ENCODE measurements at regions of chr7 and their contacts with region 1.

Region 1: DNA sequence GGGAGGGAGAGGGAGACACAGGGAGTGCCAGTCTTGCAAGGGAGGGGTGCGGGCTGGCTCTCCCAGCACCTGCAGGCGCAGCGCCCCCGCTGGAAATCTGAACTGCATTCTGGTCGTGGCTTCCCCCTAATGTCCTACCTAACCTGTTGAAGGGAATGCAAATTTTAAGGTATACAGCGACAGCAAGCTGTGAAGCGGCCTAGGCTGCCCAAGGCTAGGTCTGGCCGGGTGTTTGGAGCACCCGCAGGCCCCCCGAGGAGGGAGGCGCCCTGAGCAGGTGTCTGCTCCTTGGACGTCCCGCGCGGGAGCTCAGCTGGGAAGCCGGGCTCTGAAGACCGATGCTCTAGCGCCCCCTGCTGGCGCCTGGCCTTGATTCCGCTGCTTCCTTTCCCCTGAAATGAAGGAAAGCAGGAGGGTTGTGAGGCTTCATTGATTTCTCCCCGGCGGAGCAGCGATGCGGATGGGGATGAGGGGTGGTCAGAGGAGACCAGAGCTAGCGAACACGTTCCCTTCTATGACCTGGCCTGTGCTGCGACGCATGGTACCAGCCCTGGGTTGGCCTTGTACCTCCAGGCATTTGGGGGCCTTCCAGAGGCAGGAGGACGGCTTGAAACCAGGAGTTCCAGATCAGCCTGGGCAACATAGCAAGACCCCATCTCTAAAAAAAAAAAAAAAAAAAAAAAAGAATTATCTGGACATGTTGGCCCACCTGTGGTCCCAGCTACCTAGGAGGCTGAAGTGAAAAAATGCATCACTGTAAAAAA is 601.3 kb downstream of the GALNT17 start:
- DNase-seq: peak; percentile 71 to 85
- ATAC-seq: peak; percentile 46 to 76 (median 66)
- H3K4me3 ChIP-seq: no peak overlapping the region
- H3K27ac ChIP-seq: no peak overlapping the region
- H3K4me1 ChIP-seq: no peaks in the 10 kb centered on the region
- H3K27me3 ChIP-seq: peaks cover 0 to 4% (median 0%) of the 10 kb centered on the region in 3 donors
- CTCF ChIP-seq: peak; percentile 95

Region 2: DNA sequence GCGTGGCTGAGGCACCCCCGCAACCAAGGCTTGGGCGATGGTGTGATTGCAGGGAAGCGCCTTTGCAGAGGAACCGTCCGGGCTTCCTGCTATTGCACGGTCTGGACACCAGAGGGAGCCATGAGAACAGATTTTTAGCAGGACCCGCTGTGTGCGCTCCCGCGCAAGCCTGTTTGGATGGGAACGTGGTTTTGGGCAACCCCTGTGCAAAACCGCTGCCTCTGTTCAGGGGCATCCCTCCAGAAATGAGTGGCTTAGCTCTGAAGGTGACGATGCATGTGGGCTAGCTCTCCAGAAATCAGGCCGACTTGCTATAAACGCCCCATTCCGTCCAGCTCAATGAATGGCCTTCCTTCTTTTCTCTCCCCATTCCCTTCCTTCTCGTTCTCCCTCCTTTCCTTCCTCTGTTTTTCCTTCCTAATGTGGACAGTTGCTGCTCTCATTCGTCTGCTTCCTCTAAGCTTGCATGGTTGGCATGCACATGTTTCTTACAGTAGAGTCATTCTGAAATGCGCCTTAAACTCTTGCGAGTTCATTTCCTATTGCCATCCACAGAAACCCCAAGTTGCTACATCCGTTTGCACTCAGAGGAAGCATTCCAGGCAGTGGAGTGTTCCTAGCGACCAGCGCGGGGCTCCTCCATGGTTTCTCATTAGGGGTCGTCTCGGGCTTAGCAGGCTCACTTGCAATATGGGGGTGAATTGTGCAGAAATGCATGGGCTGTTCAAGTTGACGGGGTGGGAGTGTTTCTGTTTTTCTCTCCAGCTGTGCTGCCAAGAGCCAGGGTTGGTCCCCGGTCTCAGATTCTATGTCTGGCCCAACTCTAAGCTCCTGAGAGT is 903.8 kb before region 1 on chr7:
- intact Hi-C with region 1: loop called (anchors 5 kb)
- DNase-seq: peak; percentile 56 to 74
- ATAC-seq: peak in 3 of 4 donors; percentile 56 to 71 (median 66)
- H3K4me3 ChIP-seq: no peak overlapping the region
- H3K27ac ChIP-seq: no peak overlapping the region
- H3K4me1 ChIP-seq: no peaks in the 10 kb centered on the region
- H3K27me3 ChIP-seq: peaks cover 0 to 3% (median 0%) of the 10 kb centered on the region in 3 donors
- CTCF ChIP-seq: peak; percentile 90

Region 3: DNA sequence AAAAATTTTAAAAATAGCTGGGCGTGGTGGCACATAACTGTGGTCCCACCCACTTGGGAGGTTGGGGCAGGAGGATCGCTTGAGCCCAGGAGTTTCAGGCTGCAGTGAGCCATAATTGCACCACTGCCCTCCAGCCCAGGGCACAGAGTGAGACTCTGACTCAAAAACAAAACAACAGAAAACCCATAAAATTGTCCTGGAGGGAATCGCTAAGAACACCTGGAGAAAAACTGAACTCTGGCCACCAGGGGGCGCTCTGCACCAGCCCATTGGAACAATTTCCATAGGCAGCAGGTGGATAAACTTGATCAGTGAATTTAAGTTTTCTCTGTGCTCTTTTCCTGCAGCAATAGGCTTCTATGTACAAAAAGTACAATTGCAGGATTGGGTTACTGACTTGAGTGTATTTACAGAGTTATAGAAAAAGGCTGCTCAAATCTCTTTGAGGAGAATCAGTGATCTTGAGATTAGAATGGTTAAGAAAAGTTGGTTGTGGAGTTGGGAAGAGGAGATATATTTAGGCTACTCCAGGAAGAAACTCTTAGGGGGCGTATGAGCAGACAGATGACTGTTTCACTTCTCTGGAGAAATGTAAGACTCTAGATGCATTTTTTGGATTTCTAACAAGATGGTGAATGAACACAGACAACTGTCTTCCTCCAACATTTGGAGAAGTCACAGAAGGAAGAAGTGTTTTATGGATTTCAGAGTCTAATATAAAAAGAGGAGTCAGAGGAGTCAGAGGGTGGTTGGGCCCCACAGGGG is 876.2 kb before region 1 on chr7:
- intact Hi-C with region 1: loop called (anchors 1 to 2 kb)
- DNase-seq: peak; percentile 53 to 70
- ATAC-seq: no peak
- H3K4me3 ChIP-seq: no peak overlapping the region
- H3K27ac ChIP-seq: no peak overlapping the region
- H3K4me1 ChIP-seq: no peaks in the 10 kb centered on the region
- H3K27me3 ChIP-seq: no peaks in the 10 kb centered on the region
- CTCF ChIP-seq: peak; percentile 95

Region 4: GRCh38 chr7:71131256-71132126 is 601.8 kb before region 1 on chr7:
- intact Hi-C with region 1: loop called in 1 of 2 experiments (anchors 10 kb)
- DNase-seq: peak in 1 of 2 donors; percentile 46
- ATAC-seq: peak; percentile 71 to 87 (median 81)
- H3K4me3 ChIP-seq: peak overlapping the region; percentile 68
- H3K27ac ChIP-seq: peak overlapping the region; percentile 36
- H3K4me1 ChIP-seq: peaks cover 3% of the 10 kb centered on the region
- H3K27me3 ChIP-seq: peaks cover 0 to 57% (median 0%) of the 10 kb centered on the region in 3 donors
- CTCF ChIP-seq: peak; percentile 22

Region 5: DNA sequence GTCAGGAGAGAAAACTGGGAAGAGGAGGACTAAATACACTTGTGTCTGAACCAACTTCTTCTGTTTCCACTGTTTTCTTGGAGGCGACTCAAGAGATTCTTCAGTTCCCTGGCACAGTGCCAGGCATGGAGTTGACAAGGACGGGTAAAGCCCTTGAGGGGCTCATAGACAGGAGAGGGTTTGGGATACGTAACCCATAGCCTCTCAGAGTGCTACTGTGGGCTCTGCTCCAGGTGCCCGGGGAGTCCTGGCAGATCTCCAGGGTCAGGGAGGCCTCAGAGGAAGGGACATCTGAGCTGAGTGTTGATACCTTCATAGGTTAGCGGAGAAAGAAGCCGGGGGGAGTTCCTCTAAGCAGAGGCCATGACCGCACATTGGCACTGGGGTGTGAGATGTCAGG is 559.3 kb before region 1 on chr7:
- intact Hi-C with region 1: no loop called
- DNase-seq: no peak
- ATAC-seq: no peak
- H3K4me3 ChIP-seq: no peak overlapping the region
- H3K27ac ChIP-seq: no peak overlapping the region
- H3K4me1 ChIP-seq: no peaks in the 10 kb centered on the region
- H3K27me3 ChIP-seq: no peaks in the 10 kb centered on the region
- CTCF ChIP-seq: no peak

Region 6: GRCh38 chr7:71237945-71238344 is 495.3 kb before region 1 on chr7:
- intact Hi-C with region 1: loop called in 1 of 2 experiments (anchors 5 kb)
- DNase-seq: no peak
- ATAC-seq: peak; percentile 58 to 75 (median 74)
- H3K4me3 ChIP-seq: no peak overlapping the region
- H3K27ac ChIP-seq: peak overlapping the region; percentile 76
- H3K4me1 ChIP-seq: peaks cover 17% of the 10 kb centered on the region
- H3K27me3 ChIP-seq: no peaks in the 10 kb centered on the region
- CTCF ChIP-seq: peak; percentile 20

Region 7: GRCh38 chr7:71612911-71613310 is 120.4 kb before region 1 on chr7:
- intact Hi-C with region 1: loop called in 1 of 2 experiments (anchors 10 kb)
- DNase-seq: no peak
- ATAC-seq: no peak
- H3K4me3 ChIP-seq: no peak overlapping the region
- H3K27ac ChIP-seq: no peak overlapping the region
- H3K4me1 ChIP-seq: peaks cover 30% of the 10 kb centered on the region
- H3K27me3 ChIP-seq: no peaks in the 10 kb centered on the region
- CTCF ChIP-seq: no peak

Region 8: GRCh38 chr7:72152161-72153131 is 419.2 kb after region 1 on chr7:
- intact Hi-C with region 1: no loop called
- DNase-seq: no peak
- ATAC-seq: peak in 1 of 4 donors; percentile 15
- H3K4me3 ChIP-seq: no peak overlapping the region
- H3K27ac ChIP-seq: no peak overlapping the region
- H3K4me1 ChIP-seq: no peaks in the 10 kb centered on the region
- H3K27me3 ChIP-seq: no peaks in the 10 kb centered on the region
- CTCF ChIP-seq: no peak